Left ventricle myocardium inferior (tissue), 1 donor: ENCODE measurements at regions of chr9 and their contacts with region 1.

Region 1: GRCh38 chr9:75866273-75866871 is 24.1 kb upstream of the PCSK5 start:
- DNase-seq: no peak
- H3K4me3 ChIP-seq: no peak overlapping the region
- H3K27ac ChIP-seq: no peak overlapping the region
- H3K4me1 ChIP-seq: no peaks in the 10 kb centered on the region
- H3K27me3 ChIP-seq: peaks cover 9% of the 10 kb centered on the region
- CTCF ChIP-seq: peak; percentile 86

Region 2: DNA sequence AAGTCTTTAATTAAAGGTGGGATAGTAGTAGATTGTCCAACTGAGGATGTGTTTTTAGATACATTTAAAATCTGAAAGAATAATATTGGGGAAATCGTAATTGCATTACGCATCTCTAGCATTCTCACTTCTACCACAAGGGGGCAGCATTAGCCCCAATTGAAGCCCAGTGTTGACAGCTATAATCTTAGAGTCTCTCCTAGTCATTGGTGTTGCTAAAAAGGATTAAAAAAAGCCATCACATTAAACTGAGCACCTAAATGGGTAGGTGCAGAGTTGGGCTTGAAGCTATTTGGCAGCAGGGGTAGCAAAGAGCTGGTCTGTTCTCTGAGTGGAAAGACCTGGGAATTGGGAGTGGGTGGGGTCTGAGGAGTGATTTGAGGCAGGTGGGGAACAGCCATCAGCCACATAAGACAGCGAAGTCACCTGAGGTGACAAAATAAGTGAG is 600.8 kb before region 1 on chr9:
- intact Hi-C with region 1: loop called (anchors 5 kb)
- DNase-seq: no peak
- H3K4me3 ChIP-seq: no peak overlapping the region
- H3K27ac ChIP-seq: no peak overlapping the region
- H3K4me1 ChIP-seq: no peaks in the 10 kb centered on the region
- H3K27me3 ChIP-seq: no peaks in the 10 kb centered on the region
- CTCF ChIP-seq: peak; percentile 94

Region 3: DNA sequence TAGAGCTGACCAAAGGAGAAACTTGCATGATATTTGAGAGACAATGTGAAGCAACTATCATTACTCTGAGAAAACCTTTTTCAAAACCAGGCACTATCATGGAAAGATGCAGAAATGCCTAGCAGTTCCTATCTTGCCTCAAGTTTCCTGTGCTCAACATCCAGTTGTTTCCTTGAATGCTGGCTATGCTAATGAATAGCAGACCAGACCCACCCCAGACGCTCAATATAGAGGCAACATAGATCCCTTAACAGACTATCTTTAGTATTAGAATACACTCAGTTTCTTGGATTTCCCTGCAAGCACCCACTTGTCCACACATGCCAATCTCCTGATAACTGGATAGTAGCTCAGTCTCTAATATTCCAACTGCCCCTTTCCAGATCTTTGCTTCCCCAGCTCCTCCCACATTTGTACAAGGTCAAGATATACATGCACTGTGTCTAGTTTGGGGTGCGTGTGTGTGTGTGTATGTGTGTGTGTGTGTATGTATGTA is 69.2 kb before region 1 on chr9:
- intact Hi-C with region 1: no loop called
- DNase-seq: no peak
- H3K4me3 ChIP-seq: no peak overlapping the region
- H3K27ac ChIP-seq: no peak overlapping the region
- H3K4me1 ChIP-seq: no peaks in the 10 kb centered on the region
- H3K27me3 ChIP-seq: no peaks in the 10 kb centered on the region
- CTCF ChIP-seq: no peak